Astrocyte of the cerebellum (primary cell): ENCODE measurements at regions of chr10 and their contacts with region 1.

Region 1: DNA sequence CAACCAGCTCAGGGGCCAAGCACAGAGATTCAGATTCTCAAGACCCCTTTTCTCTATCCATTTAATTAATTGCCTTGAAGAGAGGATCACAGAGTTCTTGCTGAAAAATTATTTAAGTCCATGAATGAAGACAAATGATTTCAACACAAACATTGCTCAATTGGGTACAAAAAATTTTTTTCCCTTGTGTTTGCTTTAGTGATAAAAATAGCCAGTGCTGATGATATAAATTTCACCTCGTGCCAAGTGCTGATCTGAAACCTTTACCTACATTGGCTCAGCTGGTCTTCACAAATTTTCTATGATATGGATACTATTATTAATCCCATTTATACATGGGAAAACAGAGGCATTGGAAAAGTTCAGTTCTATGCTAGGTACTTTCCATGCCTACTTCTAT is 377.1 kb downstream of the NRG3 start:
- DNase-seq: no peak
- H3K4me3 ChIP-seq: no peak overlapping the region
- CTCF ChIP-seq: no peak

Region 2: GRCh38 chr10:82308641-82309040 is 56.6 kb after region 1 on chr10:
- in situ Hi-C with region 1: loop called (anchors 5 kb)
- DNase-seq: no peak
- H3K4me3 ChIP-seq: no peak overlapping the region
- CTCF ChIP-seq: no peak